Heart right ventricle (tissue), 16 donors: ENCODE measurements at regions of chr10 and their contacts with region 1.

Region 1: DNA sequence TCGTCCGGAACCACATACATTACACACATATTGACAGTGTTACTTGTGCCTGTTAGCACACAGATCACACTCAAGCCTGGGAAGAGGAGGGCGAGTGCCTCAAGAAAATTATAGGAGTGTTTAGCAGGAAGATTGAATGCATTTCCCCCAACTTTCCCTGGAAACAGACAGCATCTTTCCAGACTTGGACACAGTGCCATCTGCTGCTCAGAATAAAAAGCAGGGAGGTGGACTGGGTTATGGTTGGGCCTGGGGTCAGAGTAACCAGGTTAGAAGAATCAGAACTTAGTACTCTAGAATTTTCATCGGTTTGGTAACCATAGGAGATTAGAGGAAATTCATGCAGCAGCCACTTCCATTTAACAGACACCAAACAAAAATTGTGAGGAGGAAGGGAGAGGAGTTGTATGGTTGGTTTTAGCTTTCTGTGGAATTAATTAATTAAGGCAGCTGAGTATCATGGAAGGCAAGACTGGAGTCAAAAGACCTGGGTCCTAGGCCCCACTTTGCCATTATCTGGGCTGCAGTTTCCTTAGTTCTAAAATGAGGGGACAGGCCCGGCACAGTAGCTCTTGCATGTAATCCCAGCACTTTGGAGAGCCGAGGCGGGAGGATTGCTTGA is 43.4 kb upstream of the OPTN start:
- DNase-seq: no peak
- ATAC-seq: no peak
- H3K4me3 ChIP-seq: no peak overlapping the region
- H3K27ac ChIP-seq: no peak overlapping the region
- H3K4me1 ChIP-seq: no peaks in the 10 kb centered on the region
- H3K27me3 ChIP-seq: peaks cover 0 to 17% (median under 1%) of the 10 kb centered on the region in 7 donors
- CTCF ChIP-seq: peak in 7 of 9 donors; percentile 26 to 50 (median 38)

Region 2: GRCh38 chr10:12782537-12782936 is 274.0 kb before region 1 on chr10:
- intact Hi-C with region 1: loop called in 1 of 10 experiments (anchors 10 kb)
- DNase-seq: peak; percentile 29 to 30
- ATAC-seq: no peak
- H3K4me3 ChIP-seq: no peak overlapping the region
- H3K27ac ChIP-seq: no peak overlapping the region
- H3K4me1 ChIP-seq: peaks cover 0 to 13% (median 0%) of the 10 kb centered on the region in 9 donors
- H3K27me3 ChIP-seq: no peaks in the 10 kb centered on the region
- CTCF ChIP-seq: peak; percentile 36 to 78 (median 70)